ENCODE measurements at regions of chr16 and their contacts with region 1.

Region 1: GRCh38 chr16:27179500-27180072 is 23.7 kb upstream of the KDM8 start:
- DNase-seq: peak; percentile 77 to 89 (median 77)
- H3K4me3 ChIP-seq: no peak overlapping the region
- H3K4me3 Mint-ChIP-seq: peak overlapping the region in 1 of 7 donors; percentile 64
- H3K27ac ChIP-seq: no peak overlapping the region
- H3K27ac Mint-ChIP-seq: peak overlapping the region in 7 of 8 donors; percentile 13 to 77 (median 56)
- H3K4me1 ChIP-seq: peaks cover 23% of the 10 kb centered on the region
- H3K4me1 Mint-ChIP-seq: peaks cover 17 to 28% (median 25%) of the 10 kb centered on the region in 3 donors
- H3K27me3 ChIP-seq: no peaks in the 10 kb centered on the region
- H3K27me3 Mint-ChIP-seq: peaks cover 0 to 2% of the 10 kb centered on the region in 2 donors

Region 2: DNA sequence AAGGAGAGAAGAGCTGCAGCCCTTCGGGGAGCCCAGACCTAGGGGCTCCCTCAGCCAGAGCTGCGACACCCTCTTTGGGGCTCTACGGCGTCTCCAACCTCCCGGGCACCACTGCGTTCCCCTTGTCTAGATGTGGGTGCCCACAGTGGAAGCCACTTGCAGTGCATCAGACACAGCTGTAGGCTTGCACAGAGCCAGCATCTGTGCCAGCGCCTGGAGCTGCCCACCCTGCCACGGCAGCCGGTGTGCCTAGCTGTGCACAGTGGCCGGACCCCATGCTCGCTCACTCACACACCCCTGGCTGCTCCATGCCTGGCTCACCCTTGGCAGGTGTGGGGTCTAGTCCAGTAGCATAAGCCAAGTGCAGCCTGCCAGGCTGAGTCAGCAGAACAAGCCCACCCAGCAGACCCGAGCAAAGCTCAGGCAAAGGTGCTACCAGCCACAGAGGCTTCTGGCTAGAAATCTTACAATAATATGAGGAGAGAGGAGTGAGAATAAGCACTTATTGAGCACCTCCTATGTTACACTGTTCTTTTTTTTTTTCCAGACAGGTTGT is 10.8 kb after region 1 on chr16:
- CTCF ChIA-PET with region 1: interaction called, 104 read pairs
- POLR2A ChIA-PET with region 1: no interaction called
- DNase-seq: no peak
- H3K4me3 ChIP-seq: no peak overlapping the region
- H3K4me3 Mint-ChIP-seq: no peak overlapping the region
- H3K27ac ChIP-seq: no peak overlapping the region
- H3K27ac Mint-ChIP-seq: peak overlapping the region in 1 of 8 donors; percentile 72
- H3K4me1 ChIP-seq: peaks cover 16% of the 10 kb centered on the region
- H3K4me1 Mint-ChIP-seq: peaks cover 14 to 25% (median 21%) of the 10 kb centered on the region in 3 donors
- H3K27me3 ChIP-seq: no peaks in the 10 kb centered on the region
- H3K27me3 Mint-ChIP-seq: no peaks in the 10 kb centered on the region

Region 3: DNA sequence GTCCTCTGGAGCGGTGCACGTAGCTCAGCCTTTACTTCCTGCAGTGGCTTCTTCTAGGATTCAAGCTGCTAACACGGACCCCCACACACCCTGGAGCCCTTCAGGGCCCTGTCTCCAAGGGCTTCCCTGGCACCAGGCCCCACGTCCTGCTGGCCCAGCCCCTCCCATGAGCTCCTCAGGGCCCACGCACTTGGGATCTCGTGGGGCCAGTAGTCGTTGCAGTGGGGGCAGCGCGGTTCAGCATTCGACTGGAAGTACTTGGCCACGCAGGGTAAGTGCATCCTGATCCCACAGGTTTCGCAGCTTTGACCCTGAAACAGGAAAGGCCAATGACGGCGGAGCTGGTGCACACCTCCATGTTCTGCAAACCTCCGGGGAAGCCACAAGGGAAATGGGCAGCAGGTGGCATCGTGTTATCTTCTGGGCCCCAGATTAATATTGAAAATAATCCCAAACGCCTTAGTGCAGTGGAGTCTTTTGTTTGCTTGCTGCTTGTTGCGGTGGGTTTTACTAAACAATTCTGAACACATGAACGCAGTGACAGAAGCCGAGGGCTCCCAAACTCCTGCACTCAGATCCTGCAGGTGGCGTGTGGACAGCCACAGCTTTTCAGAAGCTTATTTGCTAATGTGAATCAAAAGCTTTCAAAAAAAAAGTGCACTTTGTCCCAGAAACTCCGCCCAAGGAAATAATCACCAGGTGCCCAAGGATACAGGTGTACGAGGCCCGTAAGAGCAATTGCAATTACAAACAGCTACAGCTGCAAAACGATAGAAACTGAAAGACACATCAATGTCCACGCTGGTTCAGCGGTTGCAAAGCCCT is 46.2 kb after region 1 on chr16:
- CTCF ChIA-PET with region 1: interaction called, 38 read pairs
- POLR2A ChIA-PET with region 1: interaction called, 7 read pairs
- DNase-seq: no peak
- H3K4me3 ChIP-seq: no peak overlapping the region
- H3K4me3 Mint-ChIP-seq: peak overlapping the region in 2 of 7 donors; percentile 12 to 43
- H3K27ac ChIP-seq: no peak overlapping the region
- H3K27ac Mint-ChIP-seq: peak overlapping the region; percentile 7 to 89 (median 62)
- H3K4me1 ChIP-seq: peaks cover 15% of the 10 kb centered on the region
- H3K4me1 Mint-ChIP-seq: peaks cover 23 to 39% (median 24%) of the 10 kb centered on the region in 3 donors
- H3K27me3 ChIP-seq: no peaks in the 10 kb centered on the region
- H3K27me3 Mint-ChIP-seq: peaks cover 0 to 2% of the 10 kb centered on the region in 2 donors

Region 4: GRCh38 chr16:27367461-27368357 is 188.1 kb after region 1 on chr16:
- CTCF ChIA-PET with region 1: interaction called, 67 read pairs
- POLR2A ChIA-PET with region 1: interaction called, 7 read pairs
- DNase-seq: peak; percentile 79 to 96 (median 92)
- H3K4me3 ChIP-seq: peak overlapping the region; percentile 23
- H3K4me3 Mint-ChIP-seq: peak overlapping the region; percentile 51 to 80 (median 72)
- H3K27ac ChIP-seq: peak overlapping the region; percentile 77
- H3K27ac Mint-ChIP-seq: peak overlapping the region; percentile 96 to 100 (median 99)
- H3K4me1 ChIP-seq: peaks cover 65% of the 10 kb centered on the region
- H3K4me1 Mint-ChIP-seq: peaks cover 33 to 71% (median 52%) of the 10 kb centered on the region in 3 donors
- H3K27me3 ChIP-seq: no peaks in the 10 kb centered on the region
- H3K27me3 Mint-ChIP-seq: no peaks in the 10 kb centered on the region

Region 5: DNA sequence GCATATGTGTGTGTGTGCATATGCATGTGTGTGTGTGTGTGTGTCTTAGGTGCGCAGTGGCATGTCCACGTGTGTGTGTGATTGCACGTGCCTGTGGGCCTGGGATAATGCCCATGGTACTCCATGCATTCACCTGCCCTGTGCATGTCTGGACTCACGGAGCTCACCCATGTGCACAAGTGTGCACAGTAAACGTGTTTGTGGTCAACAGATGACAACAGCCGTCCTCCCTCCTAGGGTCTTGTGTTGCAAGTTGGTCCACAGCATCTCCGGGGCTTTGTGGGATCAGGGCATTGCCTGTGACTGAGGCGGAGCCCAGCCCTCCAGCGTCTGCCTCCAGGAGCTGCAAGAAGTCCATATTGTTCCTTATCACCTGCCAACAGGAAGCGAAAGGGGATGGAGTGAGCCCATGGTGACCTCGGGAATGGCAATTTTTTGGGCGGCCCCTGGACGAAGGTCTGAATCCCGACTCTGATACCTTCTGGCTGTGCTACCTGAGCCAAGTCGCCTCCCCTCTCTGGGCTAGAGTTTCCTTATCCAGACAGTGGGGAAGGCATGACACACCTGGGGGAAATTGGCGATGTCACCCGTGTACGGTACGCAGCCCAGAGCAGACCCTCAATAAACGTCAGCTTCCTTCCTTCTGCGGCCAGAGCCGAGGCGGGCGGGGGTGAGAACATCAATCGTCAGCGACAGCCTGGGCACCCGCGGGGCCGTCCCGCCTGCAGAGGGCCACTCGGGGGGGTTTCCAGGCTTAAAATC is 270.0 kb after region 1 on chr16:
- CTCF ChIA-PET with region 1: interaction called, 28 read pairs
- POLR2A ChIA-PET with region 1: no interaction called
- DNase-seq: peak; percentile 83 to 94 (median 87)
- H3K4me3 ChIP-seq: peak overlapping the region; percentile 0
- H3K4me3 Mint-ChIP-seq: peak overlapping the region; percentile 61 to 93 (median 88)
- H3K27ac ChIP-seq: peak overlapping the region; percentile 74
- H3K27ac Mint-ChIP-seq: peak overlapping the region; percentile 97 to 100 (median 100)
- H3K4me1 ChIP-seq: peaks cover 80% of the 10 kb centered on the region
- H3K4me1 Mint-ChIP-seq: peaks cover 85 to 92% (median 88%) of the 10 kb centered on the region in 3 donors
- H3K27me3 ChIP-seq: no peaks in the 10 kb centered on the region
- H3K27me3 Mint-ChIP-seq: peaks cover 0 to 9% of the 10 kb centered on the region in 2 donors

Measured in CD8-positive, alpha-beta memory T cell (primary cell).